CD14-positive monocyte (primary cell): ENCODE measurements at regions of chr13 and their contacts with region 1.

Region 1: GRCh38 chr13:76473552-76474134 is 412.6 kb downstream of the KCTD12 start:
- DNase-seq: peak; percentile 66 to 76 (median 70)
- H3K4me3 ChIP-seq: no peak overlapping the region
- H3K4me3 Mint-ChIP-seq: no peak overlapping the region
- H3K27ac ChIP-seq: no peak overlapping the region
- H3K27ac Mint-ChIP-seq: no peak overlapping the region
- H3K4me1 ChIP-seq: no peaks in the 10 kb centered on the region
- H3K4me1 Mint-ChIP-seq: no peaks in the 10 kb centered on the region
- H3K27me3 ChIP-seq: no peaks in the 10 kb centered on the region
- H3K27me3 Mint-ChIP-seq: peaks cover 0 to 2% (median 1%) of the 10 kb centered on the region in 3 donors
- CTCF ChIP-seq: peak; percentile 87

Region 2: DNA sequence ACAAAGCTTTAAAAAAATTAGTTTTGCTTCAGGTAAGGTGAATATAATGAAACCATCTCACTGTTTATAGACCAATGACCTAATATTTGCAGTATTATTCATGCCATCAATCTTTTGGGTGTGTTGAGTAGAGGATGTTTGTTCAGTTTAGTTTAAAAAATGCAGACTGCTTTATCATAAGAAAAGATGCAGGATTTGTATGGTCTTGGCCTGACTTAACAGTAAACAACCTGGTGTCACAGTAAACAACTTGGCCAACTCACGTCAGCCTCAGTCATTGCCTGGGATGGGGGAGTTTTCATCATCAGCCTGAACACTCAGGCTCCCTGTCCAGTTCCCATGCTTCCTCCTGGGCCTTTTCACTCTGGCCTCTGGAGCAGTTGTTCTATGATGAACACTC is 782.5 kb before region 1 on chr13:
- intact Hi-C with region 1: loop called in 1 of 2 experiments (anchors 10 kb)
- DNase-seq: no peak
- H3K4me3 ChIP-seq: no peak overlapping the region
- H3K4me3 Mint-ChIP-seq: no peak overlapping the region
- H3K27ac ChIP-seq: no peak overlapping the region
- H3K27ac Mint-ChIP-seq: no peak overlapping the region
- H3K4me1 ChIP-seq: no peaks in the 10 kb centered on the region
- H3K4me1 Mint-ChIP-seq: no peaks in the 10 kb centered on the region
- H3K27me3 ChIP-seq: no peaks in the 10 kb centered on the region
- H3K27me3 Mint-ChIP-seq: no peaks in the 10 kb centered on the region
- CTCF ChIP-seq: no peak

Region 3: GRCh38 chr13:75864718-75865117 is 608.9 kb before region 1 on chr13:
- intact Hi-C with region 1: loop called in 1 of 2 experiments (anchors 10 kb)
- DNase-seq: no peak
- H3K4me3 ChIP-seq: no peak overlapping the region
- H3K4me3 Mint-ChIP-seq: no peak overlapping the region
- H3K27ac ChIP-seq: no peak overlapping the region
- H3K27ac Mint-ChIP-seq: no peak overlapping the region
- H3K4me1 ChIP-seq: no peaks in the 10 kb centered on the region
- H3K4me1 Mint-ChIP-seq: no peaks in the 10 kb centered on the region
- H3K27me3 ChIP-seq: no peaks in the 10 kb centered on the region
- H3K27me3 Mint-ChIP-seq: peaks cover 0 to 5% (median 4%) of the 10 kb centered on the region in 3 donors
- CTCF ChIP-seq: no peak

Region 4: DNA sequence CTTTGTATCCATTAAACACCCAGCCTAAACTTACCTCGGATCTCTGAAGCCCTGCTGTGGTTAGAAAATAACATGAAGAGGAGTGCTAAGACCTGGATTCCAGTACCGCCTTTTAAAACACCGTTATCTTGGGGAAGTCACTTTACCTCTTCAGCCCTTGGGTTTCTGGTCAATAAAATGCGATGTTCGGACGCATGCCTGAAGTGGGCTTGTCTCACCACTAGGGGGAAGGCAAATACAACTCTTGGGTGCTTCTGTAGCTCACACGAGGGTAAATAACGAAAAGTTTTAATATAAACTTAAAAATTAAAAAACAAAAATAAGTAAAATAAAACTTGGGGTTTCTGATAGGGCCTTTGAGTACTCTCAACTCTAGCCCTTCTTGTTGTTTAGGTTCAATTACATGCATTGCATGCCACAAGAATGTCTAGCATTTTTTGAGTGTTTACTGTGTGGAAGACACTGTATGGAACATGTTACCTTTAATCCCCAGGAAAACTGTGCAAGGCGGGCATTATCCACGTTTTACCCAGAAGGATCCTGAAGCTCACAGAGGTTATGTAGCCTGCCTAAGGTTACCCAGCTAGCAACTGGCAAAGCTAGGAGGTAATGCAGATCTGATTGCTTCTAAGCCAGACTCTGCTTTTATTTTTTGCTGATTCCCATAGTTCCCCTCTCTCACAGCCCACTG is 597.1 kb before region 1 on chr13:
- intact Hi-C with region 1: loop called in 1 of 2 experiments (anchors 10 kb)
- DNase-seq: peak; percentile 33 to 58 (median 45)
- H3K4me3 ChIP-seq: no peak overlapping the region
- H3K4me3 Mint-ChIP-seq: peak overlapping the region; percentile 31 to 34
- H3K27ac ChIP-seq: no peak overlapping the region
- H3K27ac Mint-ChIP-seq: peak overlapping the region in 2 of 7 donors; percentile 45 to 59
- H3K4me1 ChIP-seq: peaks cover 17 to 26% of the 10 kb centered on the region in 2 donors
- H3K4me1 Mint-ChIP-seq: peaks cover 25% of the 10 kb centered on the region
- H3K27me3 ChIP-seq: peaks cover 0 to 2% of the 10 kb centered on the region in 2 donors
- H3K27me3 Mint-ChIP-seq: peaks cover 0 to 9% (median 1%) of the 10 kb centered on the region in 3 donors
- CTCF ChIP-seq: peak; percentile 93

Region 5: DNA sequence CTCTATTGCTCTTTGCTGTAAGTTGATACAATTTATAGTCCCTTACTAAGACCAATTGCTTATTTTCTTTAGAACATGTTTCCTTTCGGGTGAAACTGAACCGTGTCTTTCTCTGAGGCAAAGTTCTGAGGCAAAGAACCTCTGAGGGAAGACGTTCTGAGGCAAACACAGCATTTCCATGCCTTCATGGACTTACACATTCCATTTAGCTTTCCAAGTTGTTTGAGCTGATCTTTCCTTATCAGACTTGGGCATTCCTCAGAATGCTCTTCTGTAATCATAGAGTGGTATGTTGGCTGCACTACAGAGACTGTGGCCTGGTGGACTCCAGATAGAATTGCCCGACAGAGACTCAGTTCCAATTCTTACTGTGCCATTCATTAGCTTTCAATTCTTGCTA is 166.5 kb before region 1 on chr13:
- intact Hi-C with region 1: no loop called
- DNase-seq: no peak
- H3K4me3 ChIP-seq: no peak overlapping the region
- H3K4me3 Mint-ChIP-seq: no peak overlapping the region
- H3K27ac ChIP-seq: no peak overlapping the region
- H3K27ac Mint-ChIP-seq: no peak overlapping the region
- H3K4me1 ChIP-seq: no peaks in the 10 kb centered on the region
- H3K4me1 Mint-ChIP-seq: no peaks in the 10 kb centered on the region
- H3K27me3 ChIP-seq: no peaks in the 10 kb centered on the region
- H3K27me3 Mint-ChIP-seq: no peaks in the 10 kb centered on the region
- CTCF ChIP-seq: no peak

Region 6: GRCh38 chr13:76489274-76489673 is 15.6 kb after region 1 on chr13:
- intact Hi-C with region 1: no loop called
- DNase-seq: no peak
- H3K4me3 ChIP-seq: no peak overlapping the region
- H3K4me3 Mint-ChIP-seq: no peak overlapping the region
- H3K27ac ChIP-seq: no peak overlapping the region
- H3K27ac Mint-ChIP-seq: no peak overlapping the region
- H3K4me1 ChIP-seq: no peaks in the 10 kb centered on the region
- H3K4me1 Mint-ChIP-seq: no peaks in the 10 kb centered on the region
- H3K27me3 ChIP-seq: no peaks in the 10 kb centered on the region
- H3K27me3 Mint-ChIP-seq: no peaks in the 10 kb centered on the region
- CTCF ChIP-seq: no peak